Dendritic cell treated with granulocyte-macrophage colony-stimulating factor and Interleukin-4, amounts not matched to agents 40 ng/mL and 50 ng/mL, for 4 days (primary cell): ENCODE measurements at regions of chr9 and their contacts with region 1.

Region 1: DNA sequence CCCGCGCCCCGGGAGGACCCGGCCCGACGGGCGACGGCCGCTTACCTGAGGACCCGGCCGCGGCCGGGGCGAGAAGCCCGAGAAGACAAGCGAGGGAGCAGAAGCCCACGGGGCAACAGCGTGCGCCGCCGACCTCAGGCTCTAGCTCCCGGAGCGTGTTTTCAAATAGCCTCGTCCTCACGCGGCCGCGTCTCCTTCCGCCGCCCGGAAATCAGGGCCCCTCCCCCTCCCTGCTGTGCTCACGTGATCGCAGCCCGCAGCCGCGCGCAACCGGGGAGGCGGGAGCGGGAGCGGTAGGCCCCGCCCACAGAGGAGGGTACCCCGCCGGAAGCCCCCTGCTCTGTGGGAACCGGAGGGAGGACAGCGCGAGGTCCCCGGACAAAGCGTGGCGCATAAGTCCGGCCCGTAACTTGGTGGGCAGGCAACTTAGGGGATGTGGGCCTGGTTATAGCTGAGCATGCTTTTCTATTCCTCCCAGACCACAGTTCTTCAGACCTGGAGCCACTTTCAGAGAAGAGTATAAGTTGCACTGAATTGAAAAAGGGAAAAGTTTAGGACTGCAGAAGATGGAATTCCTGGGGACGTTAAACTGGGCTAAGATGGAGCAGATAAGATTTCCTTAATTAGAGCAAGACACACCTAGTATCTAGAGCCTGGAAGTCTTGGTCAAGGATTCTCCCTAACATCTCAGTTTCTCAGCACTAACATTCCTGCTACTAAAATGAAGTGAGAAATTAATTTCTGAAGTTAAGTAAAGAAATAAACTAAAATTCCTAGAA is at the start of gene TEX10:
- H3K4me3 Mint-ChIP-seq: peak within 1 kb of the TSS; percentile 95
- H3K27ac Mint-ChIP-seq: peak within 1 kb of the TSS; percentile 92
- H3K4me1 Mint-ChIP-seq: peaks cover 35% of the 10 kb centered on the region
- H3K27me3 Mint-ChIP-seq: no peaks in the 10 kb centered on the region

Region 2: DNA sequence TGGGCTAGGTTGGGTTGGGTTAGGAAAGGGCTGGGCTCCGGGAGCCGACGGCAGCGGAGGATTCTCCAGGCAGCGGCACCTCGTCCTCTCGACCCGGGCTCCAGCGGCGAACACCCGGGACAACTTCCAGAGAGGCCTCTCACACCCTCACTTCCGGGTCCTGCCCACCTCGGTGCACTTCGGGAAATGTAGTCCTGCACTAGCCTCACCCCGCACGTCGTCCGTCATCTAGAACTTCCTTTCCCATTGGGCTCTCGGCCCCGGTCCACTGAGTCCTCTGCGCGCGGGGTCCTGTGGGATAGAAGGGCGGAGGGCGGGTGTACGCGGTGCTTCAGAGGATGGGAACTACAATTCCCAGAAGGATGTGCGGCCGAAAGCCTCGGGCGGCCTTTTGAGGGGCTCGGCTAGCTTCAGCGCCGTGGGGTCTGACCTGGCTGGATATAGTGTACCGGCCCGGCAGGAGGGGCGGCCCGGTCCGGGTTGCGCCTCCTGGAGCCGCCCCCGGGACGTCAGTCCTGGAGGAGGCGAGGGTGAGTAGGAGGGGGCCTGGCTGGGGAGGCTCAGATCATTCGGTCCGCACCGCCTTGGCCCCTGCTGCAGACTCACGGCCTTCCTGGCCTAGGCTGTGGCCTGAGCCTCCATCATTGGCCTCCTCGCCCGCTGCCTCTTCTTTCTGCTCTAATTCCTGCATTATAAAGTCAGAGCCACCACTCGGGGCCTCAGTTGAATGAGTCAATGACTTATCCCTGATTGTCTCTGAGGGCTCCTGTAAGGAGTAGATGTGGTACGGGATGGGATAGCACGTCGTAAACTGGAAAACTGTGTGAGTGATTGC is 253.8 kb before region 1 on chr9 and contains the starts of genes ERP44 and INVS:
- intact Hi-C with region 1: loop called (anchors 10 kb)
- H3K4me3 Mint-ChIP-seq: peak within 1 kb of the TSS; percentile 100
- H3K27ac Mint-ChIP-seq: peak within 1 kb of the TSS; percentile 100
- H3K4me1 Mint-ChIP-seq: peaks cover 19% of the 10 kb centered on the region
- H3K27me3 Mint-ChIP-seq: no peaks in the 10 kb centered on the region

Region 3: GRCh38 chr9:100411472-100412283 is 58.8 kb after region 1 on chr9:
- intact Hi-C with region 1: loop called (anchors 1 kb)
- H3K4me3 Mint-ChIP-seq: peak overlapping the region; percentile 84
- H3K27ac Mint-ChIP-seq: peak overlapping the region; percentile 73
- H3K4me1 Mint-ChIP-seq: peaks cover 37% of the 10 kb centered on the region
- H3K27me3 Mint-ChIP-seq: peaks cover 8% of the 10 kb centered on the region

Region 4: GRCh38 chr9:100426530-100427428 is 73.9 kb after region 1 on chr9 and contains the start of gene MSANTD3:
- intact Hi-C with region 1: loop called (anchors 5 kb)
- H3K4me3 Mint-ChIP-seq: peak within 1 kb of the TSS; percentile 81
- H3K27ac Mint-ChIP-seq: peak within 1 kb of the TSS; percentile 85
- H3K4me1 Mint-ChIP-seq: peaks cover 37% of the 10 kb centered on the region
- H3K27me3 Mint-ChIP-seq: peaks cover 10% of the 10 kb centered on the region

Region 5: GRCh38 chr9:100598641-100599145 is 245.8 kb after region 1 on chr9:
- intact Hi-C with region 1: loop called (anchors 5 kb)
- H3K4me3 Mint-ChIP-seq: peak overlapping the region; percentile 74
- H3K27ac Mint-ChIP-seq: peak overlapping the region; percentile 28
- H3K4me1 Mint-ChIP-seq: peaks cover 18% of the 10 kb centered on the region
- H3K27me3 Mint-ChIP-seq: peaks cover 28% of the 10 kb centered on the region